ENCODE measurements at regions of chr4 and their contacts with region 1.

Region 1: DNA sequence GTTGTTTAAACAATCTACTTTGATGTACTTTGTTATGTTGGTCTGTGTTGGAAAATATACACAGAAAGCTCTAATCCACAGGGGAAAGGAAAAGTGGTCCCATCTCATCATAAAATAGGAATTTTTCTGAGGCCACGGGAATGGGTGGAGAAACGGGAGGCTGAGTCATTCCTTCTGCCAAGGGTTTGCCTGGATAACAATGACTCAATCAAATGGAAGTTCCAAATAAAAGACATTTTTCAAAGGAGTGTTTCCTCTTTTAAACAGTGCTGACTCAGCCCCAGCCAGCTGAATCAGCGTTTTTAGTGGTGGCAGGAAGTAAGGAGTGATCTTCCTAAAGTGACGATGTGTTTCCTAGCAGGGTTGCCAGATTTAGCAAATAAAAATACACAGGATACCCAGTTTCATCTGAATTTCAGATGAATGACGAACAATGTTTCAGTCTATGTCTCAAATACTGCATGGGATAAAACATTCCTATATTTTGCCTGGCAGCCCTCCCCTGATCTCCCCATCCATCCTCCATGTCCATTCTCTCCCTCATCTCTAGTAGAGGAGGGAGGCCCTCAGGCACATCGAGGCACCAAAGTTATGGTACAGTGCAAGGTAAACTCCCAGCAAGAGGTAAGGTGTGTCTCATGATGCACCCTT is 345.4 kb upstream of the GATB start:
- DNase-seq: peak; percentile 76
- ATAC-seq: no peak

Region 2: DNA sequence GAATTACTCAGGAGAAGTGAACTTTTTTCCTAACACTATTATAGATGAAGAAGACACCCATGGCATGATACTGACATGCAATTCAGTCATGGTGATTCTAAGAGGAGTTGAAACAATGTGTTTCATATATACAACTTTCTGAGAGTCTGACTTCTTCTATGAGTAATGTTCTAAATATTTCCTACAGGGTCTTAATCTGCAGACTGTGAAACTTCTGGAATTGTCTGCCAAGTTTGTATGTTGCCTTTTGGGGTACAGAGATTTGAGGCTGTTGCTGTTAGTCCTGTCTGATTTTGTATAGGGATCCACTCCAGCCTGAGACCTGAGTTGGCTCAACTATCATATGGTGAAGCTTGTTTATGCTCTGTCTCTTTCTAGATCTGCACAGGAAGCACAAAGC is 184.9 kb before region 1 on chr4:
- intact Hi-C with region 1: no loop called
- DNase-seq: no peak
- ATAC-seq: no peak

Region 3: DNA sequence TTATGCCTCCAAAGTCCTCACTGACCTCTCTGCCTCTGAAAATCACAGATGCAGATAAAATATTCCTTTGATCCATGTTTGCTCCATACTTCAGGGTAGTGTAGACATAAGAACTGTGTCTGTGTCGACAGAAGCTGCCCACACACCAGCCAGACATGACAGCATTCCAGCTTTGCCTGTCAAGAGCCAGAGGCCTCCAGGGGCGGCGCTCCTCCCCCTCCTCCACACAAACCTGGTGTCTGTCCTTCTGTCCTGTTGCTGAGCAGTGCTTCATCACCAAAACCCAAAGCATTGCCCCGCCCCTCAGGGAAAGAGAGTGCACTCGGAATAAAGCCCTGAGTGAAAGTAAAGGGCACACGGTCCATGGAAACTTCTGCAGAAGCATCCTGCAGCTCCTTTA is 50.2 kb after region 1 on chr4:
- intact Hi-C with region 1: loop called (anchors 5 kb)
- DNase-seq: no peak
- ATAC-seq: peak; percentile 82

Region 4: DNA sequence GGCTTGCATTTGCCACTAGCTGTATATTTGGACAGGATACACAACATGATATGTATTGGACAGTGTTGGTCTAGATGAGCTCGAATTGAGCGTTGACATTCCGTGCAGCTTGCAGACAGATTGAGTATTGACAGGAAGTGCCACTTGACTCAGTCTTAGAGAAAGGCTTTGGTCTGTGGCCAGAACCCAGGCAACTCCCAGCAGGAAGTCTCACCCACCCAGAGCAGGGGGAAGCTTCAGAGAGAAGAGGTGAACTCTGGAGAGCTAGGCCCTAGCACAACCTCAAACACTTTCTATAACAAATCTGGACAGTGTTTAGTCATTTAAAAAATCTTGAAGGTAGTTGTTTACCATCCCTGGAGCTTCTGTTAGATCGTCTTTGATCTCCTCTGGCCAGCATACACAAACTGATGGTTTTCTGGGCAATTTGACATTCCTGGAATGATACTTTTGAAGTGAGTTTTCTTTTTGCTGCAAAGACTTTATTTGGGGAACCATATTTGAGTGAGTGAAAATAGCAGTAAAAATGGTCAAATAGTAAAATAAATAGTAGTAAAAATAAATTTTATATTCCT is 149.3 kb after region 1 on chr4:
- intact Hi-C with region 1: loop called (anchors 5 kb)
- DNase-seq: no peak
- ATAC-seq: peak; percentile 37

Region 5: DNA sequence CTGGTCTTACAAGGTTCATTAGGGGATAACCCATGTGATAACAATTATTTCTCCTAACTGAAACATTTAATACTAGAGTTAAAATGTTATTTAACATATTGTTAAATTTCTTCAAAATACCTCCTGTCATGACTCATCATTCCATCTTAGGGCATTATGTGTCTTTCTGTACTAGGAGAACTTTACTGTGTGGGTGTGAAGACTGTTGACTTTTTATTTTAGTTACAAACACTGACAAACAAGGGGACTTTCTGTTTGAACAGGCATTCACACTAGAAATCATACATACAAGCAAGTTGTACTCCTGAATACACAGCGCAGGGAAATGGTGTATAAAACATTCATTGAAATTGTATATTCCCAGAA is 253.8 kb after region 1 on chr4:
- intact Hi-C with region 1: no loop called
- DNase-seq: no peak
- ATAC-seq: no peak

Measured in Right ventricle myocardium inferior (tissue), 1 donor.